ENCODE measurements at regions of chr16 and their contacts with region 1.

Region 1: GRCh38 chr16:82544378-82545160 is 82.2 kb upstream of the CDH13 start:
- DNase-seq: no peak
- ATAC-seq: no peak
- H3K4me3 ChIP-seq: no peak overlapping the region
- H3K4me3 Mint-ChIP-seq: no peak overlapping the region
- H3K27ac ChIP-seq: no peak overlapping the region
- H3K27ac Mint-ChIP-seq: no peak overlapping the region
- H3K4me1 ChIP-seq: no peaks in the 10 kb centered on the region
- H3K4me1 Mint-ChIP-seq: no peaks in the 10 kb centered on the region
- H3K27me3 ChIP-seq: peaks cover 0 to 7% of the 10 kb centered on the region in 2 experiments
- H3K27me3 Mint-ChIP-seq: peaks cover 9 to 18% of the 10 kb centered on the region in 2 donors

Region 2: GRCh38 chr16:82580298-82580890 is 35.8 kb after region 1 on chr16:
- CTCF ChIA-PET with region 1: no interaction called
- POLR2A ChIA-PET with region 1: no interaction called
- DNase-seq: peak in 1 of 35 experiments; percentile 37
- ATAC-seq: no peak
- H3K4me3 ChIP-seq: no peak overlapping the region
- H3K4me3 Mint-ChIP-seq: no peak overlapping the region
- H3K27ac ChIP-seq: no peak overlapping the region
- H3K27ac Mint-ChIP-seq: no peak overlapping the region
- H3K4me1 ChIP-seq: no peaks in the 10 kb centered on the region
- H3K4me1 Mint-ChIP-seq: no peaks in the 10 kb centered on the region
- H3K27me3 ChIP-seq: peaks cover 0 to 4% of the 10 kb centered on the region in 2 experiments
- H3K27me3 Mint-ChIP-seq: peaks cover 5 to 6% of the 10 kb centered on the region in 2 donors

Region 3: GRCh38 chr16:82605076-82605475 is 60.5 kb after region 1 on chr16:
- CTCF ChIA-PET with region 1: interaction called in 1 of 2 experiments, 13 read pairs
- POLR2A ChIA-PET with region 1: no interaction called
- DNase-seq: no peak
- ATAC-seq: no peak
- H3K4me3 ChIP-seq: no peak overlapping the region
- H3K4me3 Mint-ChIP-seq: no peak overlapping the region
- H3K27ac ChIP-seq: no peak overlapping the region
- H3K27ac Mint-ChIP-seq: no peak overlapping the region
- H3K4me1 ChIP-seq: no peaks in the 10 kb centered on the region
- H3K4me1 Mint-ChIP-seq: peaks cover 0 to 4% (median 0%) of the 10 kb centered on the region in 3 donors
- H3K27me3 ChIP-seq: peaks cover 0 to 2% of the 10 kb centered on the region in 2 experiments
- H3K27me3 Mint-ChIP-seq: peaks cover 4 to 9% of the 10 kb centered on the region in 2 donors

Measured in T-cell (primary cell).